A549 (cell line): ENCODE measurements at regions of chr11 and their contacts with region 1.

Region 1: GRCh38 chr11:117226388-117227385 is 5.2 kb downstream of the PCSK7 start:
- DNase-seq: peak; percentile 67 to 71
- ATAC-seq: peak; percentile 91 to 93
- H3K4me3 ChIP-seq: no peak overlapping the region
- H3K27ac ChIP-seq: no peak overlapping the region
- H3K4me1 ChIP-seq: peaks cover 7% of the 10 kb centered on the region; the same call in 1 of the 3 replicates
- CTCF ChIP-seq: peak; percentile 72
- EP300 ChIP-seq: no peak
- POLR2A ChIP-seq: no peak
- RAD21 ChIP-seq: peak; percentile 77 to 83

Region 2: DNA sequence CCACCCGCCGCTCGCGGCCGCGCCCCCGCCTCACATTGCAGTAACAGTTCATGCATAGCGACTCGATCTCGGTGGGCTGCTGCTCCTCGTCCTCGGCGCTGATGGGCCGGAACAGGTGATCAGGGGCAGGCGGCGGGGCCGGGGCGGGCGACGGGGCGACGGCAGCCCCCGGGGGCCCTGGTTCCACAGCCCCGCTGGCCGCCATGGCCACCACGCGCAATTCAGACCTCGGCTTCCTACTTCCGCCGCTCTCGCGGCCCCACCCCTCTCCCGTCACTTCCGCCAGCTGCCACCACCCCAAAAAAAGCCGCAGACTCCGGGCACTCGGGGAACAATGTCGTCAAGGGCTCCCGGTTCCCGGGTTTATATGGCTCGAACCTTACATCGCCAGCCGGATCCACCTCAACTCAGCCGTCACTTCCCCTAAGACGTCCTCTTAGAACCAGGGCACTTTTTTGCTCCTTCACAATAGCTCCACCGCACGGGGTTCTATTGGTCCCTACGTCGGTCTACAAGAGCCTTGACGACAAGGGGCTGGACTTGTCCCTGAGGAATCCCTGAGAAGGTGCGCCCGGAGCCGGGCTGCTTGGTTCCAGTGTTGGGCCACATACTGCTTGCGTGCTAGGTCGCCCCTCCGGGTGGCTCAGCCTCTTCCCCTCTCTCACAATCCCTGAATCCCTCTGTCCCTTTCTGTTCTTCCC is 438.8 kb before region 1 on chr11 and contains the start of gene ZPR1:
- CTCF ChIA-PET with region 1: interaction called, 26 read pairs
- POLR2A ChIA-PET with region 1: interaction called, 3 read pairs
- DNase-seq: peak; percentile 58 to 82
- ATAC-seq: peak; percentile 85 to 89
- H3K4me3 ChIP-seq: peak within 1 kb of the TSS; percentile 94
- H3K27ac ChIP-seq: peak within 1 kb of the TSS; percentile 94 to 97
- H3K4me1 ChIP-seq: peaks cover 10% of the 10 kb centered on the region; the same call in 1 of the 3 replicates
- CTCF ChIP-seq: no peak
- EP300 ChIP-seq: no peak
- POLR2A ChIP-seq: peak; percentile 76
- RAD21 ChIP-seq: no peak
- polyA plus RNA-seq, gene ZPR1: 65.6 and 77.5 TPM in 2 replicates

Region 3: DNA sequence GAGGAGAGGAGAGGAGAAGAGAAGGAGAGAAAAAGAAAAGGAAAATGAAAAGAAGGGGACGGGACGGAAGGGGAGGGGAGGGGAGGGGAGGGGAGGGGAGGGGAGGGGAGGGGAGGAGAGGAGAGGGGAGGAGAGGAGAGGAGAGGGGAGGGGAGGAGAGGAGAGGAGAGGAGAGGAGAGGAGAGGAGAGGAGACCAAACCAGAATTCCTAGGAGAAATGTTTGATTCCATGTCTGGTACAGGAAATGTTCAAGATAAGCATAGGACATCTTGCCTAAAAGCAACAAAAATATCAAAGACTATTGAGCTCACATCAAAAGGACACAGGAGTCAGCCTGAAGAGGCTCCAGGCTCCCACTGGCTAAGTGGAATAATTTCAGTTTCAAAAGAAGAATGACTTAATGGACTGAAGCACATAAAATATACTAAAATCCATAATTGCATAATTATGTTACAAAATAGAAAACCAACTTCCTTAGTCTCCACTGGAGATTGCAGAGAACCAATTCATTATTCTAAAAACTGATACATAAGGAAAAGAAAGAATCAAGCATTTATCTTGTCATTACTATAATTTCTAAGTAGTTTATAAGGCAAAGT is 288.1 kb before region 1 on chr11:
- CTCF ChIA-PET with region 1: no interaction called
- POLR2A ChIA-PET with region 1: no interaction called
- DNase-seq: no peak
- ATAC-seq: no peak
- H3K4me3 ChIP-seq: no peak overlapping the region
- H3K27ac ChIP-seq: no peak overlapping the region
- H3K4me1 ChIP-seq: no peaks in the 10 kb centered on the region
- CTCF ChIP-seq: no peak
- EP300 ChIP-seq: no peak
- POLR2A ChIP-seq: no peak
- RAD21 ChIP-seq: no peak

Region 4: GRCh38 chr11:117178210-117179034 is 48.3 kb before region 1 on chr11 and contains the start of gene SIDT2:
- CTCF ChIA-PET with region 1: interaction called, 69 read pairs
- POLR2A ChIA-PET with region 1: no interaction called
- DNase-seq: peak; percentile 76 to 83
- ATAC-seq: peak; percentile 84 to 94
- H3K4me3 ChIP-seq: peak within 1 kb of the TSS; percentile 91
- H3K27ac ChIP-seq: peak within 1 kb of the TSS; percentile 86 to 95
- H3K4me1 ChIP-seq: peaks cover 13% of the 10 kb centered on the region
- CTCF ChIP-seq: no peak
- EP300 ChIP-seq: no peak
- POLR2A ChIP-seq: peak; percentile 35; the same call in 1 of the 2 replicates
- RAD21 ChIP-seq: no peak; a peak in 1 of 5 replicates
- polyA plus RNA-seq, gene SIDT2: 8.5 and 15.4 TPM in 2 replicates

Region 5: GRCh38 chr11:117210620-117211019 is 16.1 kb before region 1 on chr11:
- CTCF ChIA-PET with region 1: interaction called, 23 read pairs
- POLR2A ChIA-PET with region 1: no interaction called
- DNase-seq: no peak
- ATAC-seq: no peak
- H3K4me3 ChIP-seq: no peak overlapping the region
- H3K27ac ChIP-seq: no peak overlapping the region
- H3K4me1 ChIP-seq: peaks cover 3% of the 10 kb centered on the region; the same call in 1 of the 3 replicates
- CTCF ChIP-seq: no peak
- EP300 ChIP-seq: no peak
- POLR2A ChIP-seq: no peak
- RAD21 ChIP-seq: no peak